ENCODE measurements at regions of chrX and their contacts with region 1.

Region 1: DNA sequence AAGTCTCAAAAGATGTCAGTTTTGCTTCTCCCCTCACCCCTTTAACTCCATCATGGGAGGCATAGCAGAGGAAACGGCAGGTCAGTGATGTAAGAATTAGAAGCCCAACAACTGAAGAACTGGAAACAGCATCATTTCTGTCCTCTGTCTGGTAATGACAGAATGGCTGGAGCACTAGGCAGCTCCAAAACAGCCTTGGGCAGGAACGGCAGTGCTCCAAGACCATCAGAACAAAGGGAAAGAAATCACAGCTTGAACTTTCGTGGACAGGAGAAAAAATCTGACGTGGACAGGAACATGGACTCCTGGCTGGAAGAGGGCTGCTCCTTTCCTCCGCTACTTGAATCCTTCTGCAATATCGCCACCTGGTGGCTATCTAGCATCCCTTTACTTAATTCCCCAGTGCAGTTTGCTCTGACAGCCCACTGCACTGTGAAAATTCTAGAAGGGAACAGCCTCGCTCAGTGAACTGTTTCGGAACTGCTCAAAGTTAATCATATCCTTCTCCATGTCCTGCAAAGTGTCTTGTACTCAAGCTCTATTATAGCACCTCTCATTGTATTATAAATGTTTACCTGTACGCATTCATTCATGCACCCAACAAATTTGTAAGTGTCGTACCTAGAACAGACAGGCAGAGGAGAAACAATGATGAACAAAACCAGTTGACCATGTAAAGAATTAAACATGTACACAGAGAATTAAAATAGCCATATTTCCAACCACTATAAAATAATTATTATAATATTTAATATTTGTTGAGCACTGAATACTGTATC is 20.4 kb downstream of the SLC25A53 start:
- DNase-seq: peak in 2 of 3 donors; percentile 51 to 67
- ATAC-seq: peak; percentile 90 to 94
- H3K4me3 ChIP-seq: peak overlapping the region; percentile 52
- H3K27ac ChIP-seq: peak overlapping the region; percentile 67
- H3K4me1 ChIP-seq: peaks cover 1% of the 10 kb centered on the region
- H3K27me3 ChIP-seq: no peaks in the 10 kb centered on the region

Region 2: DNA sequence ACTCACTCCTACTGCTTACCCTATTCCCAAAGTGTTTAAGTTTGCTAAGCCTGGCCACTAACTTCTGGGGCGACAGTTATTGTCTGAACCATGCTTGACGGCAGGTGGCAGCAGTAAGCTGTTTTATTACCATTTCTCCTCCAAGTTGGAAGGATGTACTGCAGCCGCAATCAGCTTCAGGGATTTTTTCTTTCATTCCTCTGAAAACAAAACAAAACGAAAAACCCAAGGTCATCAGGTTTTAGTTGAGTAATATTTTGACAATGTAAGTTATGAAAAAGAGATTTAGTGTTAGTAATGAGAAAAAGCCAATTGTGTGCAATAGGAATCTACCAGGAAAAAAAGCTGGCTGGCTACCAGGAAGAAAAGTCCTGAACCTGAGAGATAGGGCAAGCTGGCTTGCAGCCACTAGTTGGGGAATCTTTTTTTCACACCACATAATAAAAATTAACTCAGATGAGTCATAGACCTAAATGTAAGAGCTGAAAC is 291.2 kb before region 1 on chrX:
- intact Hi-C with region 1: loop called in 2 of 4 experiments (anchors 10 kb)
- DNase-seq: peak; percentile 60 to 86 (median 74)
- ATAC-seq: peak; percentile 79 to 85
- H3K4me3 ChIP-seq: no peak overlapping the region
- H3K27ac ChIP-seq: no peak overlapping the region
- H3K4me1 ChIP-seq: no peaks in the 10 kb centered on the region
- H3K27me3 ChIP-seq: no peaks in the 10 kb centered on the region

Region 3: GRCh38 chrX:103954259-103954658 is 182.2 kb before region 1 on chrX:
- intact Hi-C with region 1: no loop called
- DNase-seq: peak in 1 of 3 donors; percentile 39
- ATAC-seq: no peak
- H3K4me3 ChIP-seq: no peak overlapping the region
- H3K27ac ChIP-seq: no peak overlapping the region
- H3K4me1 ChIP-seq: no peaks in the 10 kb centered on the region
- H3K27me3 ChIP-seq: no peaks in the 10 kb centered on the region

Region 4: GRCh38 chrX:104098151-104098808 is 38.1 kb before region 1 on chrX:
- intact Hi-C with region 1: loop called in 1 of 4 experiments (anchors 1 kb)
- DNase-seq: peak in 2 of 3 donors; percentile 37 to 46
- ATAC-seq: peak in 1 of 2 donors; percentile 73
- H3K4me3 ChIP-seq: no peak overlapping the region
- H3K27ac ChIP-seq: no peak overlapping the region
- H3K4me1 ChIP-seq: no peaks in the 10 kb centered on the region
- H3K27me3 ChIP-seq: no peaks in the 10 kb centered on the region